CD14-positive monocyte (primary cell): ENCODE measurements at regions of chr15 and their contacts with region 1.

Region 1: GRCh38 chr15:78108299-78109084 is 16.1 kb downstream of the SH2D7 start:
- DNase-seq: peak; percentile 84 to 89 (median 84)
- H3K4me3 ChIP-seq: no peak overlapping the region
- H3K4me3 Mint-ChIP-seq: no peak overlapping the region
- H3K27ac ChIP-seq: no peak overlapping the region
- H3K27ac Mint-ChIP-seq: no peak overlapping the region
- H3K4me1 ChIP-seq: peaks cover 5 to 6% of the 10 kb centered on the region in 2 donors
- H3K4me1 Mint-ChIP-seq: peaks cover 16% of the 10 kb centered on the region
- H3K27me3 ChIP-seq: no peaks in the 10 kb centered on the region
- H3K27me3 Mint-ChIP-seq: peaks cover 0 to 3% (median 2%) of the 10 kb centered on the region in 3 donors
- CTCF ChIP-seq: peak; percentile 92

Region 2: GRCh38 chr15:77959432-77959879 is 149.0 kb before region 1 on chr15:
- intact Hi-C with region 1: loop called (anchors 2 kb)
- DNase-seq: peak; percentile 51 to 65 (median 64)
- H3K4me3 ChIP-seq: peak overlapping the region in 1 of 3 experiments; percentile 41
- H3K4me3 Mint-ChIP-seq: peak overlapping the region; percentile 70 to 80
- H3K27ac ChIP-seq: no peak overlapping the region
- H3K27ac Mint-ChIP-seq: no peak overlapping the region
- H3K4me1 ChIP-seq: peaks cover 0 to 7% of the 10 kb centered on the region in 2 donors
- H3K4me1 Mint-ChIP-seq: peaks cover 9% of the 10 kb centered on the region
- H3K27me3 ChIP-seq: peaks cover 0 to 2% of the 10 kb centered on the region in 2 donors
- H3K27me3 Mint-ChIP-seq: peaks cover 0 to 9% (median 8%) of the 10 kb centered on the region in 3 donors
- CTCF ChIP-seq: peak; percentile 95

Region 3: GRCh38 chr15:78000091-78000926 is 108.2 kb before region 1 on chr15:
- intact Hi-C with region 1: loop called (anchors 1 to 2 kb)
- DNase-seq: peak; percentile 68 to 75 (median 73)
- H3K4me3 ChIP-seq: no peak overlapping the region
- H3K4me3 Mint-ChIP-seq: no peak overlapping the region
- H3K27ac ChIP-seq: peak overlapping the region in 1 of 2 donors; percentile 27
- H3K27ac Mint-ChIP-seq: peak overlapping the region; percentile 1 to 71 (median 52)
- H3K4me1 ChIP-seq: no peaks in the 10 kb centered on the region
- H3K4me1 Mint-ChIP-seq: peaks cover 8% of the 10 kb centered on the region
- H3K27me3 ChIP-seq: no peaks in the 10 kb centered on the region
- H3K27me3 Mint-ChIP-seq: peaks cover 0 to 2% (median 1%) of the 10 kb centered on the region in 3 donors
- CTCF ChIP-seq: peak; percentile 78

Region 4: DNA sequence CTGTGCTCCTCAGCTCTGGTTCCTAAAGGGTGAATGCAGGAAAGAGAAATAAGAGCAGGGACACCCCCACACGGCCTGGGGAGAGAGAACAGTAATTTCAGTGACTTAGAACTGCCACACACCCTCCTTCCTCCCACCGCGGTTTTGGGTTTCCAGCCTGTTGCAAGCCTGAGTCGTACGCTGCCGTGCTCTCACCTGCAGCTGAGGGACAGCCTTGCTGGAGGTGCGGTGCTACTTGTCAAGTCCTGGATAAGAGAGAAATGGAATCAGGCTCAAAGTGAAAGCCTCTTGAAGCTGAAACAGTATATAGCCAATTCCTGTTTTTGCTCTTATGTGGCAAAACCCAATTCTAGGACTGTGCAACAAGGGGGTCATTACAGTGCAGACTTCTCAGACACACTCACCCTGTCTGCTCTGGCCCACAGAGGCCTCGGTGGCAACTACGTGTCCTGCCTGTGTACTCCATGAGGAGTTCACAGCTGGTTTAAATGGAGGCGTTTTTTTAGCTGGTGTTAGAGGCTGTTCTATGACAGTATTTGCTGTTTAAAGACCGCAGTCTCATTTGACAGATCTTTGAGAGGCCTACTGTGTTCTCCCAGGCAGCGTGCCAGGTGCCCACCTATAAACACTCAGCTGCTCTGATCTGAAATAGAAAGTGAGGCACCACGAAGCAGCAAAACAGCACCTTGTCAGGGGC is 73.8 kb before region 1 on chr15:
- intact Hi-C with region 1: no loop called
- DNase-seq: peak; percentile 66 to 76 (median 75)
- H3K4me3 ChIP-seq: peak overlapping the region in 1 of 3 experiments; percentile 63
- H3K4me3 Mint-ChIP-seq: peak overlapping the region; percentile 79 to 92
- H3K27ac ChIP-seq: peak overlapping the region; percentile 73 to 84
- H3K27ac Mint-ChIP-seq: peak overlapping the region; percentile 89 to 95 (median 92)
- H3K4me1 ChIP-seq: peaks cover 78 to 82% of the 10 kb centered on the region in 2 donors
- H3K4me1 Mint-ChIP-seq: peaks cover 79% of the 10 kb centered on the region
- H3K27me3 ChIP-seq: no peaks in the 10 kb centered on the region
- H3K27me3 Mint-ChIP-seq: peaks cover 0 to 1% (median 0%) of the 10 kb centered on the region in 3 donors
- CTCF ChIP-seq: no peak

Region 5: DNA sequence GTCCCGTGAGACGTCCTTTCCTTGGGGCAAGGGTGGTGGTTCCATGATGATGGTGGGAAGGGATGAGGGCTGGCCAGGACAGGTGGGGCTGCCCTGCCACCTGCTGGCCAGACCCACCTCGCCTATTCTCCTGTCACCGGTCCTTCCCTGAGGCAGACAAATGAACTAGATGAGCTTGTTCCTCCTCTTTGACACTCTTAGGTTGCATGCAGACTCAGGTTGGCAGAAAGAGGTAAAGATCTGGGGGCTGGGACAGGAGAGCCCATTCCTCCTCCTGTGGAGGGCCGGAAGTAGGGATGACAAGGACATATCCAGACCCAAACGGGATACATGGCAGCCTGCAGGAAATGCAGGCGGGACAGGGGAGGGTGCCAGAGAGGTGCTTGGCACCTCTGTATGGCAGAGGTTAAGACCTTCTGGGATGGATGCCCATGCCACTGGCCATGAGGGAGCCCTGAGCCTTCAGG is 87.3 kb after region 1 on chr15:
- intact Hi-C with region 1: loop called (anchors 1 to 5 kb)
- DNase-seq: peak; percentile 37 to 58 (median 54)
- H3K4me3 ChIP-seq: no peak overlapping the region
- H3K4me3 Mint-ChIP-seq: no peak overlapping the region
- H3K27ac ChIP-seq: no peak overlapping the region
- H3K27ac Mint-ChIP-seq: peak overlapping the region in 1 of 7 donors; percentile 50
- H3K4me1 ChIP-seq: peaks cover 0 to 3% of the 10 kb centered on the region in 2 donors
- H3K4me1 Mint-ChIP-seq: peaks cover 4% of the 10 kb centered on the region
- H3K27me3 ChIP-seq: no peaks in the 10 kb centered on the region
- H3K27me3 Mint-ChIP-seq: peaks cover 0 to 7% (median 4%) of the 10 kb centered on the region in 3 donors
- CTCF ChIP-seq: peak; percentile 77

Region 6: GRCh38 chr15:78241007-78241406 is 132.5 kb after region 1 on chr15:
- intact Hi-C with region 1: loop called (anchors 1 to 2 kb)
- DNase-seq: peak; percentile 63 to 69 (median 67)
- H3K4me3 ChIP-seq: no peak overlapping the region
- H3K4me3 Mint-ChIP-seq: no peak overlapping the region
- H3K27ac ChIP-seq: no peak overlapping the region
- H3K27ac Mint-ChIP-seq: no peak overlapping the region
- H3K4me1 ChIP-seq: peaks cover 5% of the 10 kb centered on the region in 2 donors
- H3K4me1 Mint-ChIP-seq: peaks cover 2% of the 10 kb centered on the region
- H3K27me3 ChIP-seq: no peaks in the 10 kb centered on the region
- H3K27me3 Mint-ChIP-seq: peaks cover 0 to 2% (median 1%) of the 10 kb centered on the region in 3 donors
- CTCF ChIP-seq: peak; percentile 83

Region 7: GRCh38 chr15:78264304-78265136 is 156.0 kb after region 1 on chr15 and contains the start of gene DNAJA4:
- intact Hi-C with region 1: no loop called
- DNase-seq: peak; percentile 50 to 73 (median 62)
- H3K4me3 ChIP-seq: peak within 1 kb of the TSS; percentile 65 to 83 (median 70)
- H3K4me3 Mint-ChIP-seq: peak within 1 kb of the TSS; percentile 84 to 87
- H3K27ac ChIP-seq: peak within 1 kb of the TSS in 1 of 2 donors; percentile 64
- H3K27ac Mint-ChIP-seq: peak within 1 kb of the TSS in 6 of 7 donors; percentile 19 to 80 (median 54)
- H3K4me1 ChIP-seq: peaks cover 11 to 19% of the 10 kb centered on the region in 2 donors
- H3K4me1 Mint-ChIP-seq: peaks cover 19% of the 10 kb centered on the region
- H3K27me3 ChIP-seq: no peaks in the 10 kb centered on the region
- H3K27me3 Mint-ChIP-seq: peaks cover 0 to 3% (median 2%) of the 10 kb centered on the region in 3 donors
- CTCF ChIP-seq: peak; percentile 22
- polyA plus RNA-seq, gene DNAJA4: 2.4 to 20.9 (median 2.5) TPM